ENCODE measurements at regions of chr9 and their contacts with region 1.

Region 1: DNA sequence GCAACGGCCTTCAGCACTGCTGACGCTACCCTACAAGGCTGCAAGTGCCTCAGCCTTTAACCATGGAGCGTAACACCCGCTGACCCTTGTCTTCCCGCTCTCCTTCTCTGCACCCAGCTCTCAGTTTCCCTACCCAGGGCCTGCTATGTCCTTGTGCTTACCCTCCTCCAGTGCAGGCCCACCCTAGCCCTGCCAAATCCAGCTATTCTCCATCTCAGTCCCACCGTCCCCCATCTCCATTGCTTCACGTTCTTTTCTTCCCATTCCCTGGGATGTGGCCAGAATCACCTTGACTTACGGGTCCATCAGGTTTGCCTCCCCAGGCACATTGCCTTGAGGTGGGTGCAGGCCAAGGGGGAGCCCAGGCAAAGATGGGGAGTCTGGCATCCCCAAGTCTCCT is 91.2 kb downstream of the PAX5 start:
- DNase-seq: no peak
- CTCF ChIP-seq: no peak

Region 2: DNA sequence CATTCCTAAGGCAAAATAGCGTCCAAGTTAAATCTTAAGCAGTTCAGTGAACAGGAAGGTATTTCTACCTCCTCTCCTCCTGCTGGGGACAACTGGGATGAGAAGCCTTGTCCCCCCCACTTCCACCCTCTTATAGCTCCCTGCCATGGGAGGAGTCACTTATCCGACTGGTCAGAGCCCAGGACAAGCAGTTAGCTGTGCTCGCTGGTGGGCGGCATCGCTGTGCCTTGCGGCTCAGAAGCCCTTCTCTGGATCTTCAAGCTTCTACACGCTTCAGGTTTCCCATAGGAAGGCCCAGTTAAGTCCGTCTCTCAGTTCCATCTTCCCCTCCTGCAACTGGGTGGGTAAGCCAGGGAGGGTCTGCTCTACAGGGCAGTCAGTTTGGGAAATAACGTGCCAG is 14.0 kb after region 1 on chr9:
- CTCF ChIA-PET with region 1: interaction called, 34 read pairs
- POLR2A ChIA-PET with region 1: no interaction called
- DNase-seq: no peak
- CTCF ChIP-seq: no peak

Region 3: GRCh38 chr9:37465249-37466036 is 522.6 kb after region 1 on chr9 and contains the start of gene ZBTB5:
- CTCF ChIA-PET with region 1: no interaction called
- POLR2A ChIA-PET with region 1: no interaction called
- DNase-seq: peak; percentile 97
- CTCF ChIP-seq: no peak

Measured in GM10248 (cell line).